Left ventricle myocardium superior (tissue), 1 donor: ENCODE measurements at regions of chr15 and their contacts with region 1.

Region 1: GRCh38 chr15:90886041-90886614 is 1.8 kb downstream of the FES start:
- DNase-seq: peak; percentile 88
- ATAC-seq: peak; percentile 62

Region 2: GRCh38 chr15:90648137-90649070 is 237.7 kb before region 1 on chr15:
- intact Hi-C with region 1: loop called (anchors 5 kb)
- DNase-seq: peak; percentile 56
- ATAC-seq: peak; percentile 84